ENCODE measurements at regions of chr3 and their contacts with region 1.

Region 1: GRCh38 chr3:127822698-127823425 is 547 bp upstream of the MGLL start:
- DNase-seq: peak; percentile 85
- H3K4me3 ChIP-seq: peak overlapping the region; percentile 65 to 93 (median 78)
- H3K27ac ChIP-seq: peak overlapping the region; percentile 69 to 88 (median 82)
- H3K4me1 ChIP-seq: peaks cover 0 to 51% (median 36%) of the 10 kb centered on the region in 6 donors
- H3K27me3 ChIP-seq: peaks cover 0 to 33% (median 8%) of the 10 kb centered on the region in 7 donors
- CTCF ChIP-seq: no peak
- POLR2A ChIP-seq: no peak

Region 2: GRCh38 chr3:127697551-127698240 is 125.2 kb before region 1 on chr3:
- intact Hi-C with region 1: loop called (anchors 10 kb)
- DNase-seq: peak; percentile 90
- H3K4me3 ChIP-seq: peak overlapping the region in 2 of 8 donors; percentile 7 to 57
- H3K27ac ChIP-seq: peak overlapping the region; percentile 53 to 86 (median 76)
- H3K4me1 ChIP-seq: peaks cover 24 to 80% (median 60%) of the 10 kb centered on the region in 6 donors
- H3K27me3 ChIP-seq: no peaks in the 10 kb centered on the region
- CTCF ChIP-seq: no peak
- POLR2A ChIP-seq: no peak

Measured in spleen (tissue), 13 donors.